ENCODE measurements at regions of chr1 and their contacts with region 1.

Region 1: DNA sequence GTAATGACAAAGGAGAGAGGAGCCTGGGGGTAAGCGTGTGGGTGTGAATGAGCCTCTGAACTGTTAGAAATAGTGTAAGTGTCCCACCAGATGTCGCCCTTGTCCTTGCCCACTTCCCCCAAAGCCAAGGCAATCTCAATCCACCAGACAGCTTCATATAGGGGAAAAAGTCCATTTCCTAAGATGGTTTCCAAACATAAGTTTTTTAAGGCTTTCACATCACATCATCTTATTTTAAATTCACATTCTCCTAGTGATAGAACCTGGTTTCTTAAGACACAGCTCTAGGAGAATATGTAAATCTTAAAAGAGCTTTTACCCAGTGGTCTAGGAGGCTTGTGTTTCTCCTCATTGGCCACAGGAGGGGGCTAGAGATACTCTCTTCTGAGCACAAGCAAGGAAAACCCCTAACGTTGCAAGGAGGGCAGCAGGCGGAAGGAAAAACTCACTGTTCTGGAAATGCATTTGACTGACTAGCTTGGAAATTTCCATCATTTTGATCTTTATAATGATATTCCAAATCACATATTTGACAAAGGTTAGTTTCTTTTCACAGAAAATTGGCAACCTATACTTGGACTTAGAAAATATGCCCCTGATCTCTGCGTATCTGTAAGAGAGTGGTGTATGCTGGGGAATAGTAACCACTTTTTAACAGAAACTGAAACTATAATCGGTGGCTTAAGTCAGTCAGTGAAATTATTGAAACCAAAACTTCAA is 51.9 kb upstream of the LPAR3 start:
- DNase-seq: peak; percentile 89
- ATAC-seq: peak; percentile 93
- H3K4me3 Mint-ChIP-seq: peak overlapping the region; percentile 79
- H3K27ac Mint-ChIP-seq: peak overlapping the region; percentile 73
- H3K4me1 Mint-ChIP-seq: peaks cover 15% of the 10 kb centered on the region
- H3K27me3 Mint-ChIP-seq: no peaks in the 10 kb centered on the region

Region 2: DNA sequence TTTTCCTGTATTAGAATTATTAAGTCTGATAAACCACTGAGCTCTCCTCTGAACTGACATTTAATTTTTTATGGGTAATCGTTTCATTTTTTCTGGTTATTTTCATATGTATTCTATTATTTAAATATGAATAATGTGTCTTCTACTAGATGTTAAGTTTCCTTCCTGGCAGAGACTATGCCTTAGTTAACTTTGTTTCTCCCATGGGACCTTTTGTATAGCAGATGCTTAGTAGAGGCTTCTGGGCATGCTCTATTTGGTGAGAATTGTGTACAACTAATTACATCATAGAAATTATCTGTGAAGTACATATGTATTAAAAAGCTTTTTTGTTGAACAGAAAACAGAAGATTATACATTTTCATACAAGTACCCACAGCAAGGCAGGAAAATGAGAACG is 394.1 kb before region 1 on chr1:
- CTCF ChIA-PET with region 1: no interaction called
- POLR2A ChIA-PET with region 1: no interaction called
- DNase-seq: no peak
- ATAC-seq: no peak
- H3K4me3 Mint-ChIP-seq: no peak overlapping the region
- H3K27ac Mint-ChIP-seq: no peak overlapping the region
- H3K4me1 Mint-ChIP-seq: no peaks in the 10 kb centered on the region
- H3K27me3 Mint-ChIP-seq: no peaks in the 10 kb centered on the region

Region 3: GRCh38 chr1:84598846-84599741 is 345.8 kb before region 1 on chr1:
- CTCF ChIA-PET with region 1: no interaction called
- POLR2A ChIA-PET with region 1: no interaction called
- DNase-seq: no peak
- ATAC-seq: no peak
- H3K4me3 Mint-ChIP-seq: no peak overlapping the region
- H3K27ac Mint-ChIP-seq: no peak overlapping the region
- H3K4me1 Mint-ChIP-seq: no peaks in the 10 kb centered on the region
- H3K27me3 Mint-ChIP-seq: peaks cover 5% of the 10 kb centered on the region

Region 4: DNA sequence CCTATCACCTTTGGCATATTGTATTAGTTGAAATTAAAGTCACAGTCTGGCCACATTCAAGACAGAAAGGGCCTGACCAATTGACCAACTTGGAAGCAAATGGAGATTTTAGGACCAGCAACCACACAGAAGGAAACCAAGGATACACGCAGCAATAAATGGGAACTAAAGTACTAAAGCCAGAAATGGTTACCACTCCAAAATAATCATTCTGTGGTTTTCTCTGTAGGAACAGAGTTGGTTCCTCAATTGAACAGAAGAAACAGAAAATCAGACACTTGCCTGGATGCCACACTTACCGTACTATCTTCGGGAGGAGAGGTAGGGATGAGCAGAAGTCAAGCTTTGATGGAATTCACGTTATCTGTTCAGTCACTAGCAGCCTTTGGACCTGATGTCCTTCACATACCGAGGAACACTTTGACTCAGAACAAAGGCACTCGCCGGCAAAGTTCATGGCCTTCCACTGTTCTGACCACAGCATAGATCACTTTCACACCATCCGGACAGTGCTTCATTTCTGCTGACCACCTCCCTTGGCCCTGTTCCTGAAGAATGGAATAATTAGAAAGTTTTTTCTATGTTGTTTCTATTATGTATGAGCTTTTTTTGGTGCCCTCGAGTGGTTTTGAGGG is 148.8 kb before region 1 on chr1:
- CTCF ChIA-PET with region 1: no interaction called
- POLR2A ChIA-PET with region 1: no interaction called
- DNase-seq: no peak
- ATAC-seq: no peak
- H3K4me3 Mint-ChIP-seq: no peak overlapping the region
- H3K27ac Mint-ChIP-seq: no peak overlapping the region
- H3K4me1 Mint-ChIP-seq: no peaks in the 10 kb centered on the region
- H3K27me3 Mint-ChIP-seq: peaks cover 3% of the 10 kb centered on the region

Region 5: DNA sequence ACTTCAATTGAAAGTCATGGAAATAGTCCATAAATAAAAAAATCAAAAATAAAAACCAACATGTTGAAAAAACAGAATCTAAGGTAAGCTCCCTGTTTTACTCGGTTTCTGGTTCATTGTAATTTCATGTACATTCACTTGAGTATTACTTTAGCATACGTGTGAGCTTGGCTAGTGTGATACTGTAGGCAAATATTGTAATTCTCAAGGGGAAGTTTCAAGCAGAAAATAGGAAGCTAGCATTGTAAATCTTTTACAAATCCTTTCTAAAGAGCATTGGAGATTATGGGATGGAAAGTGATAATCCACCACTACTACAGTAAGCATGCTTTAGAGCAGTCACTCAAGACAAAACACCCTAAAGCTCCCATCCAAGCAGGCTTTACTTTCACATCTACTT is 48.6 kb before region 1 on chr1:
- CTCF ChIA-PET with region 1: no interaction called
- POLR2A ChIA-PET with region 1: no interaction called
- DNase-seq: no peak
- ATAC-seq: no peak
- H3K4me3 Mint-ChIP-seq: no peak overlapping the region
- H3K27ac Mint-ChIP-seq: no peak overlapping the region
- H3K4me1 Mint-ChIP-seq: peaks cover 12% of the 10 kb centered on the region
- H3K27me3 Mint-ChIP-seq: peaks cover 37% of the 10 kb centered on the region

Region 6: GRCh38 chr1:84996846-84997666 is 52.1 kb after region 1 on chr1 and contains the start of gene MCOLN2:
- CTCF ChIA-PET with region 1: interaction called, 27 read pairs
- POLR2A ChIA-PET with region 1: interaction called, 4 read pairs
- DNase-seq: peak; percentile 66
- ATAC-seq: peak; percentile 88
- H3K4me3 Mint-ChIP-seq: peak within 1 kb of the TSS; percentile 84
- H3K27ac Mint-ChIP-seq: peak within 1 kb of the TSS; percentile 47
- H3K4me1 Mint-ChIP-seq: peaks cover 52% of the 10 kb centered on the region
- H3K27me3 Mint-ChIP-seq: peaks cover 32% of the 10 kb centered on the region
- total RNA-seq, gene MCOLN2: 11.4 to 12.9 TPM

Region 7: DNA sequence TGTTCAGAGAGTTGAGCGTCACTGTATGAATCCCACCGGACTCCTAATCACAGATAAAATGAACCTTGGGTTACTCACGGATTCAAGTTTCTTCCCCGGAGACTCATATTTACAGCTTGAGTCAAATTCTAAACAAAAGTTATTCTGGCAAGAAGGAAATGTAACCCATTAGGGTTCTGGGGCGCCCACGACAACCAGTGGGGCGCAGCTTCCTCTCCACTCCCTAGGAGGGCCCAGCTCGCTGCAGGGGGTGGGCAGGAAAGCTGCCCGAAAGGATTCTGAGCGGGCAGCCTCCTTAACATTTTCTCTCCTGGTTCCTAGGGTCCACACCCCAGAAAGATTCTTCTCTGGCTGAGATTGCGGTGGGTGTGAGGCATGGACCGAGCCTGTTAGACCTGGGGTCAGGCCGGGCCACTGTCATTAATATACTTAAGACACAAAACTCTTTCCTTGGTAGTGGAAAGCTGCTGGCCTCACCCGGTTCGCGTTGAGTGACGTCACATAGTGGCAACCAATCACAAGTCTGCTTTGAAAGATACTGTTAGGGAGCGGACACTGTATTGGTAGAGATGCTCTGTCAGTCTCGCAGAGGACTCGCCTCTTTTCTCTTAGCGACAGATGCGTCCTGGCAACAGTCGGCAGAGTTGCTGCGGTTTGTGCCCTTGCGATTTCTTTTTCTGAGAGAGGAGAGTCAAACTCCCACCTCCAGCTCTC is 116.9 kb after region 1 on chr1:
- CTCF ChIA-PET with region 1: interaction called, 16 read pairs
- POLR2A ChIA-PET with region 1: no interaction called
- DNase-seq: peak; percentile 95
- ATAC-seq: peak; percentile 99
- H3K4me3 Mint-ChIP-seq: peak overlapping the region; percentile 85
- H3K27ac Mint-ChIP-seq: peak overlapping the region; percentile 86
- H3K4me1 Mint-ChIP-seq: peaks cover 14% of the 10 kb centered on the region
- H3K27me3 Mint-ChIP-seq: peaks cover 23% of the 10 kb centered on the region

Region 8: DNA sequence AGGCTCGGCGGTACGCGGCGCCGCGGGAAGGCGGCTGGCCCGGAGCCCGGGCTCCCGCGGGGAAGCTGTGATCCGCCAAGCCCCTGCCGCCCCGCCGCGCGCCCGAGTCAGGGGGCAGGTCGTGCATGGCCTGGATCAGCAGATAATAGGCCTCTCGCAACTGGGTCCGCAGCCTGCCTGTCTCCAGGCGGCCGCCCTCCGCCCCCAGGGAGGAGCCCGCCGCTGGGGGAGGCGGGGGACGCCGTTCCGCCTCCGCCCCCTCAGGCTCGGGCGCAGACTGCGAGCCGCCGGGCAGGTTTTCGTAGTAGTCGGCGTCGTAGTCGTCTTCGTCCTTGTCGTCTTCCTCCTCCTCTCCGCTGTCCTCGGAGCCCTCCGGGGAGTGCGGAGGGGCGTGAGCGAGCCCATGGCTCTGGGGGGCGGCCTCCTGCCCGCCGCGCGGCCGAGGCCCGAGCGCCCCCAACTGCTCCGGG is 256.0 kb after region 1 on chr1 and contains the start of gene SYDE2:
- CTCF ChIA-PET with region 1: interaction called, 11 read pairs
- POLR2A ChIA-PET with region 1: interaction called, 5 read pairs
- DNase-seq: peak; percentile 82
- ATAC-seq: peak; percentile 89
- H3K4me3 Mint-ChIP-seq: peak within 1 kb of the TSS; percentile 87
- H3K27ac Mint-ChIP-seq: peak within 1 kb of the TSS; percentile 93
- H3K4me1 Mint-ChIP-seq: peaks cover 25% of the 10 kb centered on the region
- H3K27me3 Mint-ChIP-seq: peaks cover 5% of the 10 kb centered on the region
- total RNA-seq, gene SYDE2: 1.9 to 2.6 TPM

Region 9: DNA sequence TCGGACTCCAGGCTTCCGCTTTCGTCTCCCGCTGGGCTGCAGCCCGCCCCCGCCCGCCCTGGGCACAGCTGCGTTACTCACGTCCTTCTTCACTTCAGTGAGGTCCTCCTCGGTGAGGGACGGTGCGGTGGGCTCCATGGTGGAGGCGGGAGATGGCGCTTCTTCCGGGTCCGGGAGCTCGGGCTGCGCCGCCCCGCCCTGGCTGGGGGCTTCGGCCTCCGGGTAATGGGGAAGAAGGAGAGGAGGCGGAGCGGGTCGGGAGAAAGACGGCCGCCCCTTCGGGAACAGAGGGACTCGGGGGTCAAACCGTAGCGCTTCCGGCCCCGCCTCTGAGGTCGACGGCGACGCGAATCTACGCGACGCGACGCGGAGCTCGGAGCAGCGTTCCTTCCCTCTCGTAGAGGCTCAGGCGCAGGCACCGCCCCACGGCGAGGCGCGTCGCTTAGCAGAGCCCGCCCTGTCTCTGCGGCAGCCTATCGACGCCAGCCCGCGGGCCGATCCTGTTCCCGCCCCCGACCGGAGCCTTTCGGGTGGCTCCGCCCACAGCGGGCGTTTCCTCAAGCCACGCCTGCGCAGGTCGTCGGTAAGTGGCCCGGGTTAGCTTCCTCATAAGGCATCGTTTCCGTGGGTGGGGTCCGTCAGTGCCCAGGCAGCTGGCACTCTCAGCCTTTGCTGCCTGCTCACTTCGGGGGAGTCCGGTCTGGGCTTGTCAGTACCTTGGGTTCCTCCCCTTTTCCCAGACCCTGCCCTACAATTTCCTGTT is 331.5 kb after region 1 on chr1 and contains the start of gene BCL10:
- CTCF ChIA-PET with region 1: interaction called, 36 read pairs
- POLR2A ChIA-PET with region 1: interaction called, 5 read pairs
- DNase-seq: peak; percentile 98
- ATAC-seq: peak; percentile 99
- H3K4me3 Mint-ChIP-seq: peak within 1 kb of the TSS; percentile 81
- H3K27ac Mint-ChIP-seq: peak within 1 kb of the TSS; percentile 95
- H3K4me1 Mint-ChIP-seq: peaks cover 45% of the 10 kb centered on the region
- H3K27me3 Mint-ChIP-seq: peaks cover 7% of the 10 kb centered on the region
- total RNA-seq, gene BCL10: 26.4 to 27.0 TPM

Measured in activated CD8-positive, alpha-beta T cell treated with anti-CD3 and anti-CD28 coated beads, Interleukin-2, amount 10 ng/mL, durations not matched to agents 7 days and 5 days (primary cell).